ENCODE measurements at regions of chr4 and their contacts with region 1.

Region 1: GRCh38 chr4:77240469-77241066 is 83.6 kb downstream of the CCNG2 start:
- DNase-seq: peak; percentile 43
- ATAC-seq: peak; percentile 99
- H3K4me3 ChIP-seq: no peak overlapping the region
- H3K27ac ChIP-seq: no peak overlapping the region
- H3K4me1 ChIP-seq: no peaks in the 10 kb centered on the region
- H3K27me3 ChIP-seq: no peaks in the 10 kb centered on the region
- CTCF ChIP-seq: peak; percentile 90
- EP300 ChIP-seq: no peak
- POLR2A ChIP-seq: no peak
- RAD21 ChIP-seq: peak; percentile 82

Region 2: DNA sequence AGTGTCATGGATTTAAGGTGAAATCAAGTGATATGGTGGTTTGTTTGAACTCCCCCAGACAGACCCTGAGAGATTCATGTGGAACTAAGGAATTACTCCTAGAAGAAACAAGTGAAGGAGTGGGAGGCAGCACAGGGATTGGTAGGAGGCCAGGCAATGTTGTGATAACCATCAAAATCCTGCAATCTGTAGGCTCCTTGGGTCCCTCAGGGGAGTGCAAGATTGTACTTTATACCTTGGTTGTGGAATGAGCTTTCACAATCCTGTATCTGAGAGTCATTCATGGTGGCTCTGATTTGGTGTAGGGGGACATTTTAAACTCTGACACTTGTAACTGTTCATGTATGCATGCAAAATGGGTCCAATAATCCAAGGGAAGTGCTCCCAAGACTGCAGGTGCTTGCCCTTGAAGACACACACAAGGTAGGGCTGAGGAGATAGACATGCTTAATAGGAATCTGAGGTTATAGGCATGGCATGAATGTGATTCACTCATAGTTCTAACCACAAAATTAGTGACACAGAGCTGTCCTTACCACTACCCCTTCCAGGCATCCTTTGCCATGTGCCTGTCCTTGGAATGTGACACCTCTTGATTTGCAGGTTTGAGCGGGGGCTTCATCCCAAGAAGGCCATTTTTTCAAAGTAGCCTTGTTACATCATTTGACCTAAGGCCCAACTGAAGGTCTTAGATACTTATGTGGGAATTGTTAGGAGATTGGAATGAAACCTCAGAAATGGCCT is 28.8 kb after region 1 on chr4:
- CTCF ChIA-PET with region 1: no interaction called
- POLR2A ChIA-PET with region 1: no interaction called
- in situ Hi-C with region 1: no loop called
- intact Hi-C with region 1: no loop called
- DNase-seq: no peak
- ATAC-seq: no peak
- H3K4me3 ChIP-seq: no peak overlapping the region
- H3K27ac ChIP-seq: no peak overlapping the region
- H3K4me1 ChIP-seq: no peaks in the 10 kb centered on the region
- H3K27me3 ChIP-seq: no peaks in the 10 kb centered on the region
- CTCF ChIP-seq: no peak
- EP300 ChIP-seq: no peak
- POLR2A ChIP-seq: no peak
- RAD21 ChIP-seq: no peak

Region 3: GRCh38 chr4:77308843-77309242 is 68.3 kb after region 1 on chr4:
- CTCF ChIA-PET with region 1: interaction called, 9 read pairs
- POLR2A ChIA-PET with region 1: no interaction called
- in situ Hi-C with region 1: loop called (anchors 5 kb)
- intact Hi-C with region 1: loop called (anchors 1 kb)
- DNase-seq: peak; percentile 31
- ATAC-seq: peak; percentile 83
- H3K4me3 ChIP-seq: no peak overlapping the region
- H3K27ac ChIP-seq: no peak overlapping the region
- H3K4me1 ChIP-seq: no peaks in the 10 kb centered on the region
- H3K27me3 ChIP-seq: no peaks in the 10 kb centered on the region; a peak in 1 of 5 replicates
- CTCF ChIP-seq: peak; percentile 61
- EP300 ChIP-seq: no peak
- POLR2A ChIP-seq: no peak
- RAD21 ChIP-seq: no peak

Region 4: GRCh38 chr4:77358315-77358928 is 117.9 kb after region 1 on chr4:
- CTCF ChIA-PET with region 1: interaction called, 14 read pairs
- POLR2A ChIA-PET with region 1: no interaction called
- in situ Hi-C with region 1: loop called (anchors 5 kb)
- intact Hi-C with region 1: loop called (anchors 1 kb)
- DNase-seq: peak; percentile 19
- ATAC-seq: peak; percentile 81
- H3K4me3 ChIP-seq: no peak overlapping the region
- H3K27ac ChIP-seq: no peak overlapping the region
- H3K4me1 ChIP-seq: no peaks in the 10 kb centered on the region
- H3K27me3 ChIP-seq: peaks cover 0 to 5% of the 10 kb centered on the region in 2 experiments; a peak in 1 of 5 replicates
- CTCF ChIP-seq: peak; percentile 70
- EP300 ChIP-seq: no peak
- POLR2A ChIP-seq: no peak
- RAD21 ChIP-seq: no peak

Region 5: GRCh38 chr4:77433418-77433733 is 192.8 kb after region 1 on chr4:
- CTCF ChIA-PET with region 1: interaction called, 3 read pairs
- POLR2A ChIA-PET with region 1: no interaction called
- in situ Hi-C with region 1: no loop called
- intact Hi-C with region 1: loop called (anchors 5 kb)
- DNase-seq: peak; percentile 53
- ATAC-seq: peak; percentile 86
- H3K4me3 ChIP-seq: no peak overlapping the region
- H3K27ac ChIP-seq: no peak overlapping the region
- H3K4me1 ChIP-seq: no peaks in the 10 kb centered on the region
- H3K27me3 ChIP-seq: no peaks in the 10 kb centered on the region
- CTCF ChIP-seq: peak; percentile 60
- EP300 ChIP-seq: no peak
- POLR2A ChIP-seq: no peak
- RAD21 ChIP-seq: no peak